PC-3 (cell line): ENCODE measurements at regions of chr7 and their contacts with region 1.

Region 1: GRCh38 chr7:157690833-157691585 is 354.2 kb downstream of the DNAJB6 start:
- DNase-seq: peak; percentile 77
- ATAC-seq: peak; percentile 89
- H3K4me3 ChIP-seq: peak overlapping the region; percentile 81; the same call in 1 of the 2 replicates
- H3K27ac ChIP-seq: no peak overlapping the region
- H3K4me1 ChIP-seq: peaks cover 8% of the 10 kb centered on the region; the same call in 1 of the 2 replicates
- H3K27me3 ChIP-seq: no peaks in the 10 kb centered on the region
- CTCF ChIP-seq: no peak

Region 2: GRCh38 chr7:157432957-157433576 is 257.9 kb before region 1 on chr7:
- CTCF ChIA-PET with region 1: no interaction called
- POLR2A ChIA-PET with region 1: no interaction called
- intact Hi-C with region 1: loop called (anchors 5 kb)
- DNase-seq: peak; percentile 66
- ATAC-seq: peak; percentile 70
- H3K4me3 ChIP-seq: peak overlapping the region; percentile 47; the same call in 1 of the 2 replicates
- H3K27ac ChIP-seq: peak overlapping the region; percentile 62
- H3K4me1 ChIP-seq: peaks cover 9% of the 10 kb centered on the region; the same call in 1 of the 2 replicates
- H3K27me3 ChIP-seq: no peaks in the 10 kb centered on the region
- CTCF ChIP-seq: peak; percentile 88

Region 3: DNA sequence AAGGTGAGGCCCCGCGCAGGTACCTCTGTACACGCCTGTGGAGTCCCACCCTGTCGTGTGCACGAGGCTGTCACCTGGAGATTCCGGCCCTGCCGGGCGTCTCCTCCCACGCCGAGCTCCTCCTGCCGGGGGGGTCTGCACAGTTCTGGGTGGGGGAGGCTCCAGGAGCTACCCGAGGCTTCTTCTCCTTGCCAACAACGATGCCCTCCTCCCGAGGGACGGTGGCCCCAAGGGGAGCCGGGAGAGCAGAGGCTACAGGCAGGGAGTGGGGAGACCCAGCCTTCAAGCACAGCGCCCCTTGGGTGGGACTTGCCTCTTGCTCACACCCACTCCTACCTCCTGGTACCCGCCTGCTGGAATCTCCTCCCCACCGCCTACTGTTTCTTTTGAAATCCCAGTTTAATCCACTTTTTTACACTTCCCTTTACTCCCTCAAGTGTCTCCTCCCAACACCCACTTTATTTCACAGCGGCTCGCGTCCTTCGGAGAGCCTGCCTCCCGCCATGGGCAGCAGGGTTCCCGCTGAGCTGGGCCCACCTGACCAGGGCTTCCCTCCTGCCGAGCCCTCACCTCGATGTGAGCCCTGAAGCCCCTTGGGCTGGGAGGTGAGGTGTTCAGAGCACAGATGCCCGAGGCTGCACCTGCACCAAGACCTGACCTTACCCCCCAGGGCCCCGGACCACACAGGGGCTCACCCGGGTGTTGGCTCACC is 16.1 kb before region 1 on chr7:
- CTCF ChIA-PET with region 1: no interaction called
- POLR2A ChIA-PET with region 1: no interaction called
- intact Hi-C with region 1: no loop called
- DNase-seq: no peak
- ATAC-seq: no peak
- H3K4me3 ChIP-seq: no peak overlapping the region
- H3K27ac ChIP-seq: no peak overlapping the region
- H3K4me1 ChIP-seq: peaks cover 10% of the 10 kb centered on the region
- H3K27me3 ChIP-seq: no peaks in the 10 kb centered on the region
- CTCF ChIP-seq: no peak

Region 4: DNA sequence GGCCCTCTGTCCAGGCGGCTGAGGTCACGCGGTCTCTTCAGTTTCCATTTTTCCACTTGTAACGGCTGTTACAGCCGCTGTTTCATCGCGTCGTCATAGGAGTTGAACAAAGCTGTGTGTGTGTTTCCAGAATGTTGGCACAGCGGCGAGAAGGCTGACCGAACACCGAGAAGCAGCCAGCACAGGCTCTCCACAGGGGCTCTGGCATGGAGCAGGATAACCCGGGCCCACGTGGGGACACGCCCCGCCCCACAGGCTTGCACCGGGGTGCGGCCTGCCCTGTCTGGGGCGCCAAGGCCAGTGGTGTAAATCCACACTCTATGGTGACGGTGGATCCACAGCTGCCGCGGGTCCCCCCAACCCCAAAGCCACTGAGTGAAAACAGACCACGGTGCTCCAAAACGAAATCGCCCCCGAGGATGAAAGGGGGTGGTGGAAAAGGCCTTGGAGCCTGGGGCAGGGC is 94.0 kb after region 1 on chr7:
- CTCF ChIA-PET with region 1: no interaction called
- POLR2A ChIA-PET with region 1: no interaction called
- intact Hi-C with region 1: no loop called
- DNase-seq: no peak
- ATAC-seq: no peak
- H3K4me3 ChIP-seq: no peak overlapping the region
- H3K27ac ChIP-seq: no peak overlapping the region
- H3K4me1 ChIP-seq: peaks cover 7% of the 10 kb centered on the region; the same call in 1 of the 2 replicates
- H3K27me3 ChIP-seq: no peaks in the 10 kb centered on the region
- CTCF ChIP-seq: no peak

Region 5: DNA sequence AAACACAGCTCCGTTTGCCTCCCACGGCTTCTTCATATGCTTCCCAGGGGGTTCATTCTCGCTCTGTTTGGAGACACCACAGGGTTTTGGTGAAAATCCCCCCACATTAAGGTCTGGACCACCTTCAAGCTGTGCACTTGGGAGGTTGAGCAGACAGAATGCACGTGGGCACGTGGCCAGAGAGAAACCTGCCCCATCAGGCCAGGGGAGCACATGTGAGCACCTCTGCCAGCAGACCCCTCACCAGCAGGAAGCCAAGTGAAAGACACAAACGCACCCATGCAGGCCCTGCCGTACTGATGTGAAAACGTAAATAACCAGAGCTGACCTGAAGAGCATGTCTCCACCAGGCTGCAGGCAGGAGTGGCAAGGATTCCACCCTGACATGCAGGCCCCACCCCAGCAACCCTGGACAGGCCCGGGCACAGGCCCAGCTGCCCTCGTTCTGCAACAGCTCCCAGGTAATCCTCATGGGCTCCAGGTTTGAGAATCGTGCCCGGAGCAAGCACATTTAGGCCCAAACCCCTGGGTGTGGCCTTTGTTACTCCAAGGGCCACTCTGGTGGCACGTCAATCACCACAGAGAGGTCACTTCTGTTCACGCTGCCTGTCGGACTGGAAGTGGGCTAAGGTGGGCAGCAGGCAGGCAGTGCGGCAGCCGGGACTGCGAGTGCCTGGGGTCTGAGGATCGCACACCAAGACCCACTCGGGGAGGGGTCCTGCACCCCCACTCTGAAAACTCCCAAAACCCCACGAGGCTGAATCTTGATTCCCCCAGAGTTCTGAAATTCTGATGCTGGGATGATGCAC is 712.2 kb after region 1 on chr7:
- CTCF ChIA-PET with region 1: no interaction called
- POLR2A ChIA-PET with region 1: no interaction called
- intact Hi-C with region 1: no loop called
- DNase-seq: no peak
- ATAC-seq: no peak
- H3K4me3 ChIP-seq: no peak overlapping the region
- H3K27ac ChIP-seq: no peak overlapping the region
- H3K4me1 ChIP-seq: no peaks in the 10 kb centered on the region
- H3K27me3 ChIP-seq: peaks cover 48% of the 10 kb centered on the region
- CTCF ChIP-seq: no peak